T-cell (primary cell): ENCODE measurements at regions of chr12 and their contacts with region 1.

Region 1: DNA sequence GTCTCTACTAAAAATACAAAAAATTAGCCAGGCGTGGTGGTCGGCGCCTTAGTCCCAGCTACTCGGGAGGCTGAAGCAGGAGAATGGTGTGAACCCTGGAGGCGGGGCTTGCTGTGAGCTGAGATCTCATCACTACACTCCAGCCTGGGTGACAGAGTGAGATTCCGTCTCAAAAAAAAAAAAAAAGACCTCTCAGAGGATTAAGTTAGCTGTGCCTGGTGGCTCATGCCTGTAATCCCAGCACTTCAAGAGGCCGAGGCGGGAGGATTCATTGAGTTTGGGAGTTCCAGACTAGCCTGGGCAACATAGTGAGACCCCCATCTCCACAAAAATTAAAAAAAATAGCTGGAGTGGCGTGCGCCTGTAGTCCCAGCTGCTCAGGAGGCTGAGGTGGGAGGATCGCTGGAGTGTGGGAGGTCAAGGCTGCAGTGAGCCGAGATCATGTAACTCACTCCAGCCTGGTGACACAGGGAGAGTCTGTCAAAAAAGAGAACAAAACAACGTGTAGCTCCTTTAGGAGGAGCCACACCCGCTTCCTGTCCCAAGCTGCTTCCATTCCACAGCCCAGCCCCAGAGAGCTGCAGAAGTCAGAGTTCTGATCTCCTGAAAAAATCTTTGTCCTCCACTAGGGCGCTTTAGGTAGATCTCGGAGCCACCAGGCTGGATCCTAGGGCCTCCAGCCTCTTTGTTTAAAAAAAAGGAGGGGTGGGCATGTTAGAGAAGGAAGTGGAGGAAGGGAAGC is 11.5 kb upstream of the ULK1 start:
- DNase-seq: no peak
- ATAC-seq: no peak
- H3K4me3 ChIP-seq: no peak overlapping the region
- H3K4me3 Mint-ChIP-seq: no peak overlapping the region
- H3K27ac ChIP-seq: no peak overlapping the region
- H3K27ac Mint-ChIP-seq: no peak overlapping the region
- H3K4me1 ChIP-seq: no peaks in the 10 kb centered on the region
- H3K4me1 Mint-ChIP-seq: no peaks in the 10 kb centered on the region
- H3K27me3 ChIP-seq: peaks cover 0 to 21% of the 10 kb centered on the region in 2 experiments
- H3K27me3 Mint-ChIP-seq: peaks cover 4 to 10% of the 10 kb centered on the region in 2 donors

Region 2: GRCh38 chr12:131949431-131950181 is 66.7 kb after region 1 on chr12 and contains the start of gene EP400:
- CTCF ChIA-PET with region 1: no interaction called
- POLR2A ChIA-PET with region 1: interaction called in 1 of 2 experiments, 21 read pairs
- DNase-seq: peak; percentile 71 to 96 (median 84)
- ATAC-seq: peak; percentile 89 to 96 (median 94)
- H3K4me3 ChIP-seq: peak within 1 kb of the TSS; percentile 73 to 89
- H3K4me3 Mint-ChIP-seq: peak within 1 kb of the TSS; percentile 89 to 93 (median 91)
- H3K27ac ChIP-seq: peak within 1 kb of the TSS; percentile 60
- H3K27ac Mint-ChIP-seq: peak within 1 kb of the TSS; percentile 87 to 90
- H3K4me1 ChIP-seq: peaks cover 4 to 42% of the 10 kb centered on the region in 2 experiments
- H3K4me1 Mint-ChIP-seq: peaks cover 28 to 44% (median 43%) of the 10 kb centered on the region in 3 donors
- H3K27me3 ChIP-seq: no peaks in the 10 kb centered on the region
- H3K27me3 Mint-ChIP-seq: no peaks in the 10 kb centered on the region
- total RNA-seq, gene EP400: 75.7 to 84.3 (median 79.2) TPM